ENCODE measurements at regions of chr2 and their contacts with region 1.

Region 1: GRCh38 chr2:29747786-29748494 is 173.4 kb downstream of the ALK start:
- DNase-seq: peak; percentile 100
- ATAC-seq: peak; percentile 89
- H3K4me3 ChIP-seq: peak overlapping the region; percentile 3; the same call in 1 of the 2 replicates
- H3K27ac ChIP-seq: peak overlapping the region; percentile 93
- H3K4me1 ChIP-seq: peaks cover 48% of the 10 kb centered on the region
- H3K27me3 ChIP-seq: no peaks in the 10 kb centered on the region
- CTCF ChIP-seq: no peak

Region 2: DNA sequence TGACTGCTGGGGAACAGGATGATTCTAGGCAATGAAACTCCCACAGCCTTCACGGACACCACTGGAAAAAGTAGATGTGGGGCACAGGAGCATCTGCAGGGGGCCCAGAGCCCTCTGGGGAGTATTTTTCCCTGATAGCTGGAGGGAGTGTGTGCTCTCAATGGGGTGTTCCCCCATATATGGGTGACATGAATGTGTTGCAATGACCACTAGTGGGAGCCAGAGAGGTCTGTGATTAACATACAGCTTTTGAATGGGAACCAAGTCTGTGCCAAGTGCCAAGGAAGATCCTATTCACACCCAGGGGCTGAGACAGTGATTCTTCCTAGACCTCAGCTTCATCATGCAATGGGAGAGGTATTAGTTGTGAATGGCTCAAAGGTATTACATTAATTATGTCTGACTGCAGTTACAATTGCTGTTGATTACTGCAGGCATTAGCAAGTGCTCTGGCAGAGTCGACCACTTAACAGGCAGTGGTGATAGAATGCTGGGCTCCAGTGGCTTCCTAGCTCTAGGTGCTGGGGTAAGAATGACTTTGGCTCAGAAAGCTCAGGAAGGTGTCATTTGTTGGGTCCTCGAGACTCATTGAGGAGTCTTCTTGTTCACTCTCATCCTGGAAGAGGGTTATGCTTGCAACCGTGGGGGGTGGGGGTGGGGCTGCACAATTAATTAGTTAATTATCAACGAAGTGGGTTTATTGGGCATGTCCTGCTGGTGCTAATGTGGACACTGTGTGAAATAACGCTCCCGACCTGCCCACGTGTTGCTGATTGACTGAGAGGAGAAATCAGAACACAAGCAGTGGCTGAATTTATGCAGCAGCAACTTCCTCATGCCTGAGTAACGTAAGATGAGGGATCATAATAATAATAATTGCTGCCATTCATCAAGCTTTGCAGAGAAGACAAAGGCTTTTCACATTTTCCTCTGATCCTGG is 438.6 kb before region 1 on chr2:
- CTCF ChIA-PET with region 1: no interaction called
- POLR2A ChIA-PET with region 1: no interaction called
- intact Hi-C with region 1: loop called (anchors 10 kb)
- DNase-seq: peak; percentile 76
- ATAC-seq: peak; percentile 82
- H3K4me3 ChIP-seq: no peak overlapping the region
- H3K27ac ChIP-seq: no peak overlapping the region
- H3K4me1 ChIP-seq: no peaks in the 10 kb centered on the region; the same call in 1 of the 2 replicates
- H3K27me3 ChIP-seq: no peaks in the 10 kb centered on the region
- CTCF ChIP-seq: peak; percentile 87

Region 3: GRCh38 chr2:29573612-29574011 is 174.3 kb before region 1 on chr2:
- CTCF ChIA-PET with region 1: no interaction called
- POLR2A ChIA-PET with region 1: no interaction called
- intact Hi-C with region 1: loop called (anchors 5 kb)
- DNase-seq: peak; percentile 65
- ATAC-seq: peak; percentile 97
- H3K4me3 ChIP-seq: no peak overlapping the region
- H3K27ac ChIP-seq: no peak overlapping the region
- H3K4me1 ChIP-seq: peaks cover 13% of the 10 kb centered on the region
- H3K27me3 ChIP-seq: no peaks in the 10 kb centered on the region
- CTCF ChIP-seq: no peak

Region 4: GRCh38 chr2:29663268-29663667 is 84.7 kb before region 1 on chr2:
- CTCF ChIA-PET with region 1: no interaction called
- POLR2A ChIA-PET with region 1: no interaction called
- intact Hi-C with region 1: loop called (anchors 1 kb)
- DNase-seq: peak; percentile 83
- ATAC-seq: peak; percentile 75
- H3K4me3 ChIP-seq: peak overlapping the region; percentile 31
- H3K27ac ChIP-seq: peak overlapping the region; percentile 96
- H3K4me1 ChIP-seq: peaks cover 42% of the 10 kb centered on the region
- H3K27me3 ChIP-seq: no peaks in the 10 kb centered on the region
- CTCF ChIP-seq: no peak

Region 5: DNA sequence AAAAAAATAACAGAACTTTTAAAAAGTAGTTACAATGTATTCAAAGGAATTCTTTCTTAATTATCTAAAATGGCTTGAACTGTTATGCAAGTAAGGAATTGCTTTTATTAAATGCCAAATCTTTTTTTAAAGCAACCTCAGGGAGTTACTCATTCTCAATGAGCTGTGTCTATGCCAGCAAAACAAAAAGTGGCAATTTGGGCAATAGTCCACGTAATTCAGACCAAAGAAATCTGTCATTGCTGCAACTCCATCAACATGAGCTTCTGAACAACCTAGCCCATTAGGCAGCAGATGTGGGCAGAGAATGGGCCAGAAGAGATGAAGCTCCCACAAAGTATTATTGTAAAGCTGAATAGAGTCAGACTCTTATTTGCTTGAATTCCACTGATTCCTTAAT is 55.0 kb after region 1 on chr2:
- CTCF ChIA-PET with region 1: interaction called, 3 read pairs
- POLR2A ChIA-PET with region 1: no interaction called
- intact Hi-C with region 1: loop called (anchors 5 kb)
- DNase-seq: peak; percentile 8
- ATAC-seq: no peak
- H3K4me3 ChIP-seq: no peak overlapping the region
- H3K27ac ChIP-seq: no peak overlapping the region
- H3K4me1 ChIP-seq: peaks cover 20% of the 10 kb centered on the region
- H3K27me3 ChIP-seq: no peaks in the 10 kb centered on the region
- CTCF ChIP-seq: no peak

Measured in PC-3 (cell line).